WTC11 (cell line): ENCODE measurements at regions of chr10 and their contacts with region 1.

Region 1: DNA sequence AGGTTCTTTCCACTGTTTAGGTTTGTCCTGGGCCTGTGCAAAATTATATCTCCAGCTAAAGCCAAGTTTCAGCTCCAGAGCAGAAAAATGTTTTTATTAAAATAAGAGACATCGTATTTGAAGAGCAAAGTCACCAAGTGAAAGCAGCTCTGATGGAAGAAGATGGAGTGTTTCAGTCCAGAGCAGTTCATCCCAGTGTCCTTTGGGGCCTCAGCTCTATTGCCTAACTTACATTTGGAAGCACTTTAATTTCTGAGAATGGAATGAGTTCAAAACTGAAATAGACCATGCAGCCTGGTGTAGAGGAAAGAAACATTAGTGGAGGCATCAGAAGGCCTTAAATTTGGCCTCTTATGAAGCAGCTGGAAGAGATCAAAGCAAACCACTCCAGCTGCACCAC is 545.2 kb downstream of the SORCS1 start:
- DNase-seq: no peak
- ATAC-seq: no peak
- H3K4me3 Mint-ChIP-seq: no peak overlapping the region
- H3K27ac Mint-ChIP-seq: no peak overlapping the region
- H3K4me1 Mint-ChIP-seq: peaks cover 9% of the 10 kb centered on the region
- H3K27me3 Mint-ChIP-seq: peaks cover 73% of the 10 kb centered on the region
- CTCF ChIP-seq: no peak

Region 2: GRCh38 chr10:106672517-106673175 is 53.3 kb after region 1 on chr10:
- CTCF ChIA-PET with region 1: no interaction called
- POLR2A ChIA-PET with region 1: interaction called, 12 read pairs
- DNase-seq: no peak
- ATAC-seq: no peak
- H3K4me3 Mint-ChIP-seq: no peak overlapping the region
- H3K27ac Mint-ChIP-seq: no peak overlapping the region
- H3K4me1 Mint-ChIP-seq: peaks cover 13% of the 10 kb centered on the region
- H3K27me3 Mint-ChIP-seq: no peaks in the 10 kb centered on the region
- CTCF ChIP-seq: no peak